ENCODE measurements at regions of chr20 and their contacts with region 1.

Region 1: DNA sequence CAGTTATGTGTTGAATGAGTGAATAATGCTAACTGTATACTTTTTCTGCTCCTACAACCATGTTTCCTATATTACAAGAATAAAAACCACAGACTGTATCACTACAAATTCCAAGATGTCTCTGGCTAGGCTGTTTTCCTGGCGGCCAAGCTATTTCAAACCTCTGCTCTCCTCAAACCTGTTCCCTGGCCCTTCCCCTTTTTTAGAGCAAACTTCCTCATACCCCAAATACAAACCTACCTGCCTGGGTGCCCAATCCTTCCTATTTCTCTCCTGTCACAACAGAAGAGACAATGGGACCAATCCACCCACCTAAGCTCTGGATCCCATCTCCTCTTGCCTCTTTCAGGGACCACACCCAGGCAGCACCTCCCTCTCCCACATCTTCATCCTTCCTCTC is 7.5 kb downstream of the TOMM34 start:
- DNase-seq: no peak
- H3K4me3 ChIP-seq: no peak overlapping the region
- H3K27ac ChIP-seq: no peak overlapping the region
- H3K4me1 ChIP-seq: no peaks in the 10 kb centered on the region
- H3K27me3 ChIP-seq: no peaks in the 10 kb centered on the region
- CTCF ChIP-seq: no peak
- EP300 ChIP-seq: no peak
- RAD21 ChIP-seq: no peak

Region 2: DNA sequence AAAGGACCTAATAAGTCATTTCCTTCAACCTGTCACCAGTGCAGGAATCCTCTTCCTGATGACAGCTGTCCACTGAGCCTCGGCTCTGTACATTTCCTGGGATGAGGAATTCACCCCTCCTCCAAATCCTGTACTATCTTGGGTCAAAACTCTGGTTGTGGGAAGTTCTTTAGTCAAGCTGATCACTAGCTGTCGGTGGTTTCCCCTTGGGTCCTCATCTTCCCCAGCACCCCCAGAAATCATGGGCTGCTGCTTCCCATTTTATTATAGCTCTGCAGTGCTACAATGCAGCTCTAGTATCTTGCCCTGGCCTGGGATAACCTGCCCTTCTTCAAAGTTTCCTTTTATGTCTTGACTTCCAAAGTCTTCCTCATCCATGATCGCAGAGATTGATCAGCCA is 286.7 kb before region 1 on chr20:
- CTCF ChIA-PET with region 1: no interaction called
- POLR2A ChIA-PET with region 1: no interaction called
- DNase-seq: no peak
- H3K4me3 ChIP-seq: no peak overlapping the region
- H3K27ac ChIP-seq: no peak overlapping the region
- H3K4me1 ChIP-seq: no peaks in the 10 kb centered on the region
- H3K27me3 ChIP-seq: no peaks in the 10 kb centered on the region
- CTCF ChIP-seq: no peak
- EP300 ChIP-seq: no peak
- RAD21 ChIP-seq: no peak

Region 3: GRCh38 chr20:44941120-44941691 is 11.5 kb before region 1 on chr20:
- CTCF ChIA-PET with region 1: interaction called, 12 read pairs
- POLR2A ChIA-PET with region 1: interaction called, 3 read pairs
- DNase-seq: no peak
- H3K4me3 ChIP-seq: no peak overlapping the region
- H3K27ac ChIP-seq: no peak overlapping the region
- H3K4me1 ChIP-seq: no peaks in the 10 kb centered on the region
- H3K27me3 ChIP-seq: no peaks in the 10 kb centered on the region
- CTCF ChIP-seq: no peak
- EP300 ChIP-seq: no peak
- RAD21 ChIP-seq: no peak

Measured in SK-N-SH (cell line).